Activated CD8-positive, alpha-beta T cell treated with anti-CD3 and anti-CD28 coated beads for 36 hours (primary cell): ENCODE measurements at regions of chr1 and their contacts with region 1.

Region 1: GRCh38 chr1:162040681-162041080 is 17.0 kb upstream of the OLFML2B start:
- DNase-seq: no peak
- ATAC-seq: no peak
- H3K4me3 Mint-ChIP-seq: no peak overlapping the region
- H3K27ac Mint-ChIP-seq: no peak overlapping the region
- H3K4me1 Mint-ChIP-seq: no peaks in the 10 kb centered on the region
- H3K27me3 Mint-ChIP-seq: peaks cover 8% of the 10 kb centered on the region
- CTCF ChIP-seq: no peak

Region 2: GRCh38 chr1:161864577-161864976 is 176.1 kb before region 1 on chr1:
- CTCF ChIA-PET with region 1: interaction called, 10 read pairs
- POLR2A ChIA-PET with region 1: no interaction called
- intact Hi-C with region 1: no loop called
- DNase-seq: peak; percentile 2
- ATAC-seq: no peak
- H3K4me3 Mint-ChIP-seq: no peak overlapping the region
- H3K27ac Mint-ChIP-seq: no peak overlapping the region
- H3K4me1 Mint-ChIP-seq: no peaks in the 10 kb centered on the region
- H3K27me3 Mint-ChIP-seq: no peaks in the 10 kb centered on the region
- CTCF ChIP-seq: no peak

Region 3: DNA sequence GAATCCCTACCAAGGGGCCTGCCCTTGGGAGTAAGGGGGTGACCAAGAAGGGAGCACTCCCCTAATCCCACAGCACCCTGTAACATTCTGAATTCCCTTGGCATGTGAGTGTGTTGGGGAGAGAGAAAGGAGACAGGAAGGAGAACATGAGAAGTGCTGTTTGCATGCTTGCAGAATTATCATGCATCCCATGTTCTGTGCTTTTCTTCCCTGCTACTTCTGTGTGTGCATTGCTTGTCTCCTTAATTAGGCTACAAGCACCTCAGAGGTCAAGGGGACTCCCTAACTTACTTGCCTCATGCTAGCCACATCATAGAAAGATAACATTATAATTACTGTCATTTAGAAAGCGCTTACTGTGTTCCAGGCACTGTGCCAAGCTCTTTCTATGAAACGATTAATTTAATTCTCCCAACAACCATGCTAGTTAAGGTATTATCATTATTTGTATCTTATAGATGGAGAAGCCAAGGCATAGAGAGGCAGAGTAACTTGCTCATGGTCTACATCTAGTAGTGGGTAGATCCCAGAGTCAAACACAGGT is 39.9 kb after region 1 on chr1:
- CTCF ChIA-PET with region 1: no interaction called
- POLR2A ChIA-PET with region 1: no interaction called
- intact Hi-C with region 1: no loop called
- DNase-seq: no peak
- ATAC-seq: no peak
- H3K4me3 Mint-ChIP-seq: no peak overlapping the region
- H3K27ac Mint-ChIP-seq: no peak overlapping the region
- H3K4me1 Mint-ChIP-seq: no peaks in the 10 kb centered on the region
- H3K27me3 Mint-ChIP-seq: peaks cover 32% of the 10 kb centered on the region
- CTCF ChIP-seq: no peak